Posterior vena cava (tissue), 2 donors: ENCODE measurements at regions of chr7 and their contacts with region 1.

Region 1: DNA sequence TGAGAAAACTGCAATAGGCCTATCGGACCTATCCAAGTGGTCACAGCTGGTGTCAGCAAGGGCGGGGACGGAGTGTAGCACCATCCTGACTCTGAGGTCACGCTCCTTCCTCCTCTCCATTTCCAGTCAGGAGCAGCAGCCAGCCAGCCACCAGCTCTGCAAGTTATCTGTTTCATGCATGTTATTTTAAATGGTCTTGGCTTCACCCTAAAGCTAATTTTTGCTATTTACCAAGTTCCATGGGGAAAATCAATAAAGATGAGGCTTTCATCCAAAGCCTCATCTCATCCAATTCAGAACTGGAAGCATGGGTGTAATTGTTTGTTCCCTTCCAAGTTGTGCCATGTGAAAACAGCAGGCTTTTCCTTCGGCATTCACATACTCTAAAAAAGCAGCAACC is 49.3 kb downstream of the ICA1 start:
- DNase-seq: no peak

Region 2: DNA sequence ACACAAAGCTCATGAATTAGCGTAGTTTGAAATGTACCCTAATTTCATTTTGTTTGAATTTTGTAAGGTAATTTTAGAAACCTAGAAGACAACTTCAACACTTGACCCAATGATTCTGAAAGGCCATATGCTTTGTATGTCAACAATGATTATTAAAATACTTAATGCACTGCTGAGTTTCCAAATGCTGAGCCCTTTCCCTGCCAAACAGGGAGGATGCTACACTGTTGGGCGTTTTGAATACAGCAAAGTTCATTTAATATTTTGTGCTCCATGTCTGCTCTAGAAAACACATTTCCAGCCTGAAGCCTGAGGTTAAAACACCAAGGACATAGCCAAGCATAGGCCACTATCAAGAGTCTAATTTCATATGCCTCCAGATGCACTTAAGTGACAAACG is 50.5 kb before region 1 on chr7:
- intact Hi-C with region 1: loop called in 1 of 2 experiments (anchors 2 kb)
- DNase-seq: no peak

Region 3: GRCh38 chr7:8185926-8186683 is 26.5 kb before region 1 on chr7:
- intact Hi-C with region 1: loop called in 1 of 2 experiments (anchors 2 kb)
- DNase-seq: no peak

Region 4: DNA sequence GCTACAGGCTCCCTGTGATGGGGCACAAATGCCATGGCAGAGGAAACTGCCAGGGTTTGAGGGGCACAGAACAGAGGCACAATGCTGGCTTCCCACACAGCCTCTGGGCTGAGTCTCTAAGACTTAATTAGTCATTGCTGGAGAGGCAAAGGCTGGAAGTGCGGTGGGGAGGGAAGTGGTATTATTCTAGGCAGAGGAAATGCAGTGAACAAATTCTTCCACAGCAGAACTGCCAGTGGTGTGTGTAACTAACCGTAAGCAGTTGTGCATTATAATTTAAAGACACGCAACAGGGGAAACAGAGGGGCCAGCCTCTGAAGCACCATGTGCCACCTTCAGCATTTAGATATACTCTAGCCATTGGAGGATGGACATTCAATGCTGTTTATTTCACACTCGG is 36.5 kb after region 1 on chr7:
- intact Hi-C with region 1: no loop called
- DNase-seq: no peak